Heart left ventricle (tissue), 16 donors: ENCODE measurements at regions of chr14 and their contacts with region 1.

Region 1: GRCh38 chr14:96001866-96002497 is 37.2 kb upstream of the C14orf132 start:
- DNase-seq: no peak
- ATAC-seq: no peak
- H3K4me3 ChIP-seq: no peak overlapping the region
- H3K27ac ChIP-seq: no peak overlapping the region
- H3K4me1 ChIP-seq: no peaks in the 10 kb centered on the region
- H3K27me3 ChIP-seq: peaks cover 0 to 50% (median 22%) of the 10 kb centered on the region in 9 donors
- CTCF ChIP-seq: no peak
- POLR2A ChIP-seq: no peak

Region 2: DNA sequence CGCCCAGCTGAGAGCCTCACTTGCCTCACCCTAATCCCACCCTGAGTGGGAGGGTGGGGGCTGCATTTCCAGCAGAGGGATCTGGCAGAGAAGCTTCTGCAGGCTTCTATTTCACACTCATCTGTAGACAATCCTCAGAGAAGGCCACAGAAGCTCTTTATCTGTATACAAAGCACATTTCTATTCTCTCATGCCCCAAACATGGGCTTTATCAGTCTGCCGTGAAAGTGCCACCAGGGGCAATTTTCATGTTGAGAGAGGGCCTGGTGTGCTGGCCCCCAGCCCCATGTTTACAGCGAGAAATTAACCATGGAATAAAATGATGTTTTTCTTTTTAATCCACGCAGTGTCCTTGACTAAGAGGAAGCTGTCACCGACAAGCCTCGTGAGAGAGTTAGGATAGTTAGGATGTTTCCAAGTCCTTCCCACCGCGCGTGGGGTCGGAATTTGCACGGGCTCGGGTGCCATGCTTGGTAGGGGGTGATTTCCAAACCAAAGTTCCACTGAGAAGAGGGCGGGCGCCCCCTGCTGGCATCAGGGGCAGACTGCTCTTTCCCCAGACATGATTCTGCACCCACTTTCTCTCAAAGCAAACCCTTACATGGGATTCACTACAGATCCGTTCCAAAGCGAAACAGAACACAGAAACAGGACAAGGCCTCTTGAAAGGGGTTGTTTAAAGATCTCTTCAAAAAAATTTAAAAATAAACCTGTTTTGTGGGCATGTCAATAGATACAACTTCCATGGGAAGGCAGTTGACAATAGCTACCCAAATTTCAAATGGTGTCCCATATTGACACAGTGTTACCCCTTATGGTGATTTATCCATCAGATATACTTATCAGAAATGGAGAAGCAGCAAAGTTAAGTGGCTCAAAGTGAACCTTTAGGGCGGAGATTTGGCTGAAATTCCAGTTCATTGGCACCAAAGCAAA is 273.5 kb after region 1 on chr14:
- intact Hi-C with region 1: loop called (anchors 1 to 10 kb)
- DNase-seq: peak; percentile 51 to 78 (median 58)
- ATAC-seq: peak in 3 of 4 donors; percentile 58 to 69 (median 64)
- H3K4me3 ChIP-seq: no peak overlapping the region
- H3K27ac ChIP-seq: no peak overlapping the region
- H3K4me1 ChIP-seq: peaks cover 0 to 8% (median 0%) of the 10 kb centered on the region in 12 donors
- H3K27me3 ChIP-seq: no peaks in the 10 kb centered on the region
- CTCF ChIP-seq: peak; percentile 83 to 96 (median 90)
- POLR2A ChIP-seq: no peak